CD8-positive, alpha-beta memory T cell (primary cell): ENCODE measurements at regions of chrX and their contacts with region 1.

Region 1: DNA sequence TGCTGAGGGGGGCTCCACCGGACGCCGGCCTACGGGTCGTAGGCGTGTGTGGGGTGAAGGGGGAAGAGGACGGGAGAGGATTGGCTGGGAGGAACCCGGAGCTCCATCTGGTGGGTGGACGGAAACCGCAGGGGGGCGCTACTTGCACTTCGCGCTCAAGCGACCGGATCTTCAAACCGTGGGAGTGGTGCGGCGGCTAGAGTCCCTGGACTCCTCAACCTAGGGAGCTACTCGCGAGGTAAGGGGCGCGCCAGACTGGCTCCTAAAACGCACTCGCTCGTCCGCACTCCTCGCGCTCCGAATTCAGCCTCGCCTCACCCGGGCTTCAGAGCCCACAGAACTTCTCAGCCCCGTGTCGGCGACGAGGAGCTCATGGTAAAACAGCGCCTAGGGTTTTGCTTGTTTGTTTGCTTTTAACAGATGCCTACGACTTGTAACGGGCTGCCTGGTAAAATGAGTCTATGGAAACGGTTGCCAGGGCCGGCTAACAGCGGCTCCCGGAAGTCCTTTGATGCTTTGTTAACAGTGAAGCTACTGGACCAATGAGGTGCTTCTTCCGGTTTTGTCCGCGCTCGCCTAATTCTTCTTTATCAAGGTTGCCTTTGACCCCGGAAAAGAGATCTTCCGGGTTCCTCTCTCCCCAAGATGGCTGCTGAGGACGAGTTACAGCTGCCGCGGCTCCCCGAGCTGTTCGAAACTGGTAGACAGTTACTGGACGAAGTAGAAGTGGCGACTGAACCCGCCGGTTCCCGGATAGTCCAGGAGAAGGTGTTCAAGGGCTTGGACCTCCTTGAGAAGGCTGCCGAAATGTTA is at the start of gene IGBP1:
- DNase-seq: peak; percentile 63 to 90 (median 83)
- H3K4me3 ChIP-seq: peak within 1 kb of the TSS; percentile 96
- H3K4me3 Mint-ChIP-seq: peak within 1 kb of the TSS; percentile 95 to 100 (median 98)
- H3K27ac ChIP-seq: peak within 1 kb of the TSS; percentile 93
- H3K27ac Mint-ChIP-seq: peak within 1 kb of the TSS; percentile 92 to 99 (median 98)
- H3K4me1 ChIP-seq: peaks cover 23% of the 10 kb centered on the region
- H3K4me1 Mint-ChIP-seq: peaks cover 33 to 46% (median 38%) of the 10 kb centered on the region in 3 donors
- H3K27me3 ChIP-seq: no peaks in the 10 kb centered on the region
- H3K27me3 Mint-ChIP-seq: peaks cover 0 to 3% of the 10 kb centered on the region in 2 donors
- total RNA-seq, gene IGBP1: 33.6 TPM

Region 2: GRCh38 chrX:70030301-70030767 is 103.2 kb before region 1 on chrX:
- CTCF ChIA-PET with region 1: no interaction called
- POLR2A ChIA-PET with region 1: no interaction called
- DNase-seq: peak in 4 of 5 donors; percentile 3 to 33 (median 15)
- H3K4me3 ChIP-seq: no peak overlapping the region
- H3K4me3 Mint-ChIP-seq: peak overlapping the region in 1 of 7 donors; percentile 19
- H3K27ac ChIP-seq: no peak overlapping the region
- H3K27ac Mint-ChIP-seq: peak overlapping the region in 2 of 8 donors; percentile 4 to 21
- H3K4me1 ChIP-seq: peaks cover 20% of the 10 kb centered on the region
- H3K4me1 Mint-ChIP-seq: peaks cover 18 to 29% (median 23%) of the 10 kb centered on the region in 3 donors
- H3K27me3 ChIP-seq: no peaks in the 10 kb centered on the region
- H3K27me3 Mint-ChIP-seq: peaks cover 3 to 17% of the 10 kb centered on the region in 2 donors

Region 3: DNA sequence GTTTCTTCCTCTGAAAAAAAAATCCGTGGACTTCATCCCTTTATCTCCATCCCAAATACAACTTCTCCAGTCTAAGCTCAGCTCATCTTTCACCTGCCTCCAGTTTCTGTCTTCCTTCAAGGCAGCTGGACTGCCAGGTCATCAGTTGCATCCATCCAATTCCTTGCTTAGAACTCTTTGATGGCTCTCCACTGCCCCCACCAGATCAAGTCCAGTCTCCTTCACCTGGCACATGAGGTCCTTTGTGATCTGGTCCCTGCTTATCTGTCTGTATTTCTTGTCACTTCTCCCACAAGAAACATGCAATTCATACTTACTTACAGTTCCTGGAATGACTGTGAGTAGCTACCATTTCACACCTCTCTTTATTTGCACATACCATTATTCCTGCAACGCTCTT is 37.5 kb before region 1 on chrX:
- CTCF ChIA-PET with region 1: interaction called, 5 read pairs
- POLR2A ChIA-PET with region 1: interaction called, 11 read pairs
- DNase-seq: no peak
- H3K4me3 ChIP-seq: no peak overlapping the region
- H3K4me3 Mint-ChIP-seq: no peak overlapping the region
- H3K27ac ChIP-seq: no peak overlapping the region
- H3K27ac Mint-ChIP-seq: no peak overlapping the region
- H3K4me1 ChIP-seq: no peaks in the 10 kb centered on the region
- H3K4me1 Mint-ChIP-seq: no peaks in the 10 kb centered on the region
- H3K27me3 ChIP-seq: no peaks in the 10 kb centered on the region
- H3K27me3 Mint-ChIP-seq: peaks cover 10 to 18% of the 10 kb centered on the region in 2 donors